ENCODE measurements at regions of chr7 and their contacts with region 1.

Region 1: DNA sequence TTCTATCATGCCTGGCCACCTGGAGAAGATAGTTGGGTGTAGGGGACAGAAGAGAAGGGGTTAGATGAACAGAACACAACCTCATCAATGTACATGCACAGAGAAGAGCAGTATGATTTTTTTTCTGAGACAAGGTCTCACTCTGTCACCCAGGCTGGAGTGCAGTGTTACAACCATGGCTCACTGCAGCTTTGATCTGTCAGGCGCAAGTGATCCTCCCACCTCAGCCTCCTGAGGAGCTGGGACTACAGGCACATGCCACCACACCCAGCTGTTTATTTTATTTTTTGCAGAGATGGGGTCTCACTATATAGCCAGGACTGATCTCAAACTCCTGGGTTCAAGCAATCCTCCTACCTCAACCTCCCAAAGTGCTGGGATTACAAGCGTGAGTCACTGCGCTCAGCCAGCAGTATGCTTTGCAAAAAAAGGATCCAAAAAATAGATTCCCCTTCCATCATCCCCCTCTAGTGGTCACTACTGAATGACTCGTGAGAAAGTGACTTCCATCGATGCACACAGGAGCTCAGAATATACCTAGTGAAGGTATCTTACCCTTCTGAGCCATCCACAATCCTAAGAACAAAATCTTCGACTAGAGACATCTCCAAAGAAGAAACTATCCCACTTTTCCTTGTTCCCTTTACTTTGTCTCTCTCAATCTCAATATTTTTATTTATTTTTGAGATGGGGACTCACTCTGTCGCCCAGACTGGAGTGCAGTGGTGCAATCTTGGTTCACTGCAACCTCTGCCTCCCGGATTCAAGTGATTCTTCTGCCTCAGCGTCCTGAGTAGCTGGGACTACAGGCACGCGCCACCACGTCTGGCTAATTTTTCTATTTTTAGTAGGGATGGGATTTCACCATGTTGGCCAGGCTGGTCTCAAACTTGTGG is 21.0 kb downstream of the ZCWPW1 start:
- DNase-seq: peak; percentile 45
- H3K4me3 Mint-ChIP-seq: no peak overlapping the region
- H3K27ac Mint-ChIP-seq: no peak overlapping the region
- H3K4me1 Mint-ChIP-seq: no peaks in the 10 kb centered on the region
- H3K27me3 Mint-ChIP-seq: no peaks in the 10 kb centered on the region

Region 2: DNA sequence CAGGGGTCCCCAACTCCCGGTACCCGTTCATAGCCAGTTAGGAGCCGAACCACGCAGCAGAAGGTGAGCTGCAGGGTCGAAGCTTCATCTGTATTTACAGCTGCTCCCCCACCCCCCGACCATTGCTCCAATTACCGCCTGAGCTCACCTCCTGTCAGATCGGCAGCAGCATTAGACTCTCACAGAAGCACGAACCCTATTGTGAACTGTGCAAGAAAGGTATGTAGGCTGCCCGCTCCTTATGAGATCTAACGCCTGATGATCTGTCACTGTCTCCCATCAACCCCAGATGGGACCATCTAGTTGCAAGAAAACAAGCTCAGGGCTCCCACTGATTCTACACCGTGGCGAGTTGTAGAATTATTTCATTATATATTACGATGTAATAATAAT is 417.1 kb before region 1 on chr7:
- CTCF ChIA-PET with region 1: no interaction called
- POLR2A ChIA-PET with region 1: no interaction called
- intact Hi-C with region 1: no loop called
- DNase-seq: no peak
- H3K4me3 Mint-ChIP-seq: no peak overlapping the region
- H3K27ac Mint-ChIP-seq: no peak overlapping the region
- H3K4me1 Mint-ChIP-seq: no peaks in the 10 kb centered on the region
- H3K27me3 Mint-ChIP-seq: no peaks in the 10 kb centered on the region

Region 3: DNA sequence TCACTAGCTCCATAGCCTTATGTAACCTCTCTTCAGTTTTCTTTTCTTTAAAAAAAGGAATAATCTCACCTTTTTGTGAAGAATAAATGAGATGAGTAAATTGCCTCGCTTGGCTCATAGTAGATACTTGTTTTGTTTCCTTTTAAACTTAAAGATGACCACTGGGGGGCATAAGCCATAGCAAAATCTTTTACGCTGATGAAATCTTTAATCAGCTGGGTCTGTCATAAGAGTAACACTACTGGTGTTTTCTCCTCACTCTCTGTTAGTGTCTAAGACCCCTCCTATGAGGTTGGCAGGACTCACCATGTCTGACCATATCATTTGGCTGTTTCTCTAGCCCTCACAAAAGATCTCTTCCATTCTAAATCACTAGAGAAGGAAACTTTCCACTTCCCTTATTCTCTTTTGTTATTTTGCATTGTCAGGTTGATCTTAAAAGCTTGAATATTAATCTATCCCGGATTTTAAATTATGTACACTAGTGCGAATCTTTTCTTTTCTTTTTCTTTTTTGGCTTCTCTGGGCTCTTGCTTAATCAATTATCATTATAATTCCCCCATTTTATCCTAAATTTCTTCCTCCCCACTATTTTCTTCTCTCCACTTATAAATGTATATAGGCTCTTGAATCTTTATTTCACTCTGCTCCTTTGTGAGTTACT is 217.4 kb before region 1 on chr7:
- CTCF ChIA-PET with region 1: interaction called, 17 read pairs
- POLR2A ChIA-PET with region 1: no interaction called
- intact Hi-C with region 1: no loop called
- DNase-seq: no peak
- H3K4me3 Mint-ChIP-seq: no peak overlapping the region
- H3K27ac Mint-ChIP-seq: no peak overlapping the region
- H3K4me1 Mint-ChIP-seq: peaks cover 18% of the 10 kb centered on the region
- H3K27me3 Mint-ChIP-seq: no peaks in the 10 kb centered on the region

Region 4: DNA sequence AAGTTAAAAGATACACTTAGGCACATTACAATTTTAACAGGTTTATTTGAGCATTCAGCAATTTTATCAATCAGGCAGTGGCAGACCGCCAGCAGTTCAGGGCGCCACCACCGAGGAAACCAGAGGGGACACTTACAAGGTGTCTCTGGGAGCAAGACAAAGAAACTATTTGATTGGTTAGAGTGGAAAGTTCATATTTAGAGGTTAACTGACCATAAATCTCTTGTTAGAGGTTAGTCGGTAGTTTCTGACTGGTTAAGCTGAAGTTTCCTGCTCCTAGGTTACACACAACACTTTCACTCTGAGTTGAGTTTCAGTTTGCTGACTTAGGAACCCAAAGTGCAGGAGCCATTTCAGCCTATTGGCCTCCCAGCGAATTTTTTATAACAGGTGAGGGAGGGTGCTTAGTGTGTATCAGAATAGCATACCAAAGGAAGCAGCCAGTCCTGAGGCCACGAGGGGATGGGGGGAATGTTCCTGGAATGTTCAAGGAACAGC is 198.6 kb before region 1 on chr7:
- CTCF ChIA-PET with region 1: interaction called, 4 read pairs
- POLR2A ChIA-PET with region 1: interaction called, 3 read pairs
- intact Hi-C with region 1: loop called (anchors 5 kb)
- DNase-seq: peak; percentile 80
- H3K4me3 Mint-ChIP-seq: peak overlapping the region; percentile 58
- H3K27ac Mint-ChIP-seq: peak overlapping the region; percentile 76
- H3K4me1 Mint-ChIP-seq: peaks cover 43% of the 10 kb centered on the region
- H3K27me3 Mint-ChIP-seq: no peaks in the 10 kb centered on the region

Region 5: DNA sequence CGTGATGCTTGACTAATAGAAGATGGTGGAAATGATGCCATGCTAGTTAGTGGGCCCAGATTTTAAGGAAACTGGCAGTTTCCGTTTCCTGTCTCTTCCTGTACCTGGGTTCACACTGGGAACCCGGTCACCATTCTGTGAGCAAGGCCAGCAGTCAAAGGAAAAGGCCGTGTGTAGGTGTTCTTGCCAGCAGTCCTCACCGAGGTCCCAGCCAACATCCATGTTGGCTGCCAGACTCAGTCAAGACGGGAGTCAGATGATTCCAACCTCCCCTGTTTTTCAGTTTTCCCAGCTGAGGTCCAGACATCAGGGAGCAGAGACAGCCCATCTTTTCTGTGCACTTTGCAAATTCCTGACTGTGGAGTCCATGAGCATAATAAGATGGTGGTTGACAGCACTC is 64.8 kb before region 1 on chr7:
- CTCF ChIA-PET with region 1: interaction called, 12 read pairs
- POLR2A ChIA-PET with region 1: no interaction called
- intact Hi-C with region 1: no loop called
- DNase-seq: no peak
- H3K4me3 Mint-ChIP-seq: no peak overlapping the region
- H3K27ac Mint-ChIP-seq: peak overlapping the region; percentile 64
- H3K4me1 Mint-ChIP-seq: peaks cover 41% of the 10 kb centered on the region
- H3K27me3 Mint-ChIP-seq: no peaks in the 10 kb centered on the region

Region 6: GRCh38 chr7:100369105-100369504 is 38.4 kb before region 1 on chr7:
- CTCF ChIA-PET with region 1: interaction called, 12 read pairs
- POLR2A ChIA-PET with region 1: no interaction called
- intact Hi-C with region 1: loop called (anchors 2 kb)
- DNase-seq: no peak
- H3K4me3 Mint-ChIP-seq: no peak overlapping the region
- H3K27ac Mint-ChIP-seq: no peak overlapping the region
- H3K4me1 Mint-ChIP-seq: peaks cover 37% of the 10 kb centered on the region
- H3K27me3 Mint-ChIP-seq: no peaks in the 10 kb centered on the region

Region 7: GRCh38 chr7:100396421-100396982 is 11.0 kb before region 1 on chr7:
- CTCF ChIA-PET with region 1: interaction called, 11 read pairs
- POLR2A ChIA-PET with region 1: no interaction called
- intact Hi-C with region 1: no loop called
- DNase-seq: peak; percentile 78
- H3K4me3 Mint-ChIP-seq: no peak overlapping the region
- H3K27ac Mint-ChIP-seq: no peak overlapping the region
- H3K4me1 Mint-ChIP-seq: peaks cover 26% of the 10 kb centered on the region
- H3K27me3 Mint-ChIP-seq: peaks cover 24% of the 10 kb centered on the region

Measured in activated CD4-positive, alpha-beta memory T cell treated with anti-CD3 and anti-CD28 coated beads for 36 hours (primary cell).